ENCODE measurements at regions of chr11 and their contacts with region 1.

Region 1: DNA sequence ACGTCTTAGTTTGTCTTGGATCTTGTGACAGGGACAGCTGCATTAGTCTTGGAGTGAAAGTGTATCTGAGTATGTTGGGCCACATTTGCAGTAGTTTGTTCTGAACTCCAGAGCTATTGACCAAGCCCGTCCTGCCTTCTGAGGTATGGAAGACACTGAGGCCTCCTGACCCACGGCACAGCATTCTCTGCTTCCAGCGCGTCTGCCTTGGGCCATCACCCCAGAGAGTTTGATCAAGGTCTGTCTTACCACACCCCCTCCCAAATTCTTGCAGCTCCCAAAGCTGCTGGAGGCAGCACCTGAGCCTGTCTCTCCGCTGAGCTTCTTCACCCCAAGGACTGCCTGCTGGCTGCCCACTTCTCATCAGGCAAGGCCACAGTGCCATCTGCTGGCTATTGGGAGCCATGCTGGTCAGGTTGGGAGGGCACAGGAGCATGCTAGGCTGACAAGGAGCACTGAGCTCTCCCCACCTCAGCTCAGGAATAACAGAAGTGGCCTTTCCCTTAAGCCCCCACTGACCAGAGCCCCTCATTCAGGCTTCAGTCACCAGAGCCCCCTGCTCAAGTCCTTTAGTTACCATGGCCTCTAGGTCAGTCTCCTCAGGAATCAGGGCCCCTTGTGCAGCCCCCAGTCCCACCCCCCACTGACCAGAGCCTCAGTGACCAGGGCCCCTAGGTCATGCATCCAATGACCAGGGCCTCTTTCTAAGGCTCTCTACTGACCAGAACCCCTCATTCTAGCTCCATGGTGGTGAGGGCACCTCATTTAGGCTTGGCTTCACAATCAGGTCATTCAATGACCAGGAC is 27.2 kb upstream of the SMPD1 start:
- DNase-seq: peak; percentile 72
- H3K4me3 ChIP-seq: no peak overlapping the region
- H3K27ac ChIP-seq: no peak overlapping the region
- H3K4me1 ChIP-seq: no peaks in the 10 kb centered on the region
- H3K27me3 ChIP-seq: no peaks in the 10 kb centered on the region
- CTCF ChIP-seq: peak; percentile 88 to 97
- POLR2A ChIP-seq: no peak

Region 2: DNA sequence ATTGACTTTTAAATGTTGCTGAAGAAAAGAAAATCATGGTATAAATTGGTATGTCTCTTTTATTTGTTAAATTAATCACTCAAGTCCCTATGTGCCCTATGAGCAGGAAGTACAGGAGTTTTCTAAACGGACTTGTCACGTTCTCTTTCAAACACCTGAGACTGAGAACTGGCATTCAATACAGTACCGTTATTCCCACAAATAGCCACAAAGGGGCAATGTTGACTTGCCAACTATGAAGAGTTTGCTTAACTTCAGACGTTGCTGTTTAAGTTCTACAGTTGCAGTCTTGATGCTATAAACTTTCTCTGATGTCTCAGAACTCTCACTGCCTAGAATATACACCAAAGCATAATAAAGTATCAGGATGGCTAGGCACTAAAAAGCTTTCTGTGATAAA is 340.1 kb before region 1 on chr11:
- CTCF ChIA-PET with region 1: interaction called, 149 read pairs
- POLR2A ChIA-PET with region 1: no interaction called
- dilution Hi-C with region 1: no loop called
- intact Hi-C with region 1: loop called (anchors 1 kb)
- DNase-seq: peak; percentile 70
- H3K4me3 ChIP-seq: no peak overlapping the region
- H3K27ac ChIP-seq: no peak overlapping the region
- H3K4me1 ChIP-seq: no peaks in the 10 kb centered on the region
- H3K27me3 ChIP-seq: peaks cover 5 to 9% of the 10 kb centered on the region in 2 experiments
- CTCF ChIP-seq: peak; percentile 36 to 46
- POLR2A ChIP-seq: no peak

Region 3: DNA sequence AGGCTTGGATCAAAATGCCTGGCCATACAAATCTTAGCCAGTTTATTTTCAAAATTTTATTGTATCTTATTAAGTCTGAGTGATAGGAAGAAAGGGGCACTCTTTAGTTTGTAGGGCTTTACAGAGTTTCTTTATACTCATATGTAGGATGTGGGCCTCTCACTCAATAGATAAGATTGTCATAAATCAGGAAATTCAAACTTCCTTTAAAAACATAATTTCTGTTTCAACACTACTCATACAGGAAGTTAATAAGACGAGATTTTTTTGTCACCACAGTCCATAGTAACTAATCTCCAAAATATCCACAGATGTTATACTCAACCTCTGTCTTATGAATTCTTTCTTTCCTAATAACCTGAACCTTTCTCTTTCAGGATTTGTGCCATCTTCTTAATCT is 268.9 kb before region 1 on chr11:
- CTCF ChIA-PET with region 1: no interaction called
- POLR2A ChIA-PET with region 1: no interaction called
- dilution Hi-C with region 1: no loop called
- intact Hi-C with region 1: no loop called
- DNase-seq: no peak
- H3K4me3 ChIP-seq: no peak overlapping the region
- H3K27ac ChIP-seq: no peak overlapping the region
- H3K4me1 ChIP-seq: peaks cover 5% of the 10 kb centered on the region
- H3K27me3 ChIP-seq: peaks cover 0 to 21% of the 10 kb centered on the region in 2 experiments
- CTCF ChIP-seq: no peak
- POLR2A ChIP-seq: no peak

Region 4: GRCh38 chr11:6285019-6285418 is 78.1 kb before region 1 on chr11:
- CTCF ChIA-PET with region 1: interaction called, 39 read pairs
- POLR2A ChIA-PET with region 1: no interaction called
- dilution Hi-C with region 1: no loop called
- intact Hi-C with region 1: no loop called
- DNase-seq: no peak
- H3K4me3 ChIP-seq: no peak overlapping the region
- H3K27ac ChIP-seq: no peak overlapping the region
- H3K4me1 ChIP-seq: no peaks in the 10 kb centered on the region
- H3K27me3 ChIP-seq: peaks cover 22 to 34% of the 10 kb centered on the region in 2 experiments
- CTCF ChIP-seq: no peak
- POLR2A ChIP-seq: no peak

Region 5: GRCh38 chr11:6315811-6316425 is 47.2 kb before region 1 on chr11:
- CTCF ChIA-PET with region 1: interaction called, 75 read pairs
- POLR2A ChIA-PET with region 1: no interaction called
- dilution Hi-C with region 1: no loop called
- intact Hi-C with region 1: no loop called
- DNase-seq: peak; percentile 51
- H3K4me3 ChIP-seq: no peak overlapping the region
- H3K27ac ChIP-seq: no peak overlapping the region
- H3K4me1 ChIP-seq: peaks cover 18% of the 10 kb centered on the region
- H3K27me3 ChIP-seq: no peaks in the 10 kb centered on the region
- CTCF ChIP-seq: peak; percentile 86 to 88
- POLR2A ChIP-seq: no peak

Region 6: GRCh38 chr11:6345366-6345765 is 17.7 kb before region 1 on chr11:
- CTCF ChIA-PET with region 1: interaction called, 35 read pairs
- POLR2A ChIA-PET with region 1: no interaction called
- dilution Hi-C with region 1: no loop called
- intact Hi-C with region 1: no loop called
- DNase-seq: no peak
- H3K4me3 ChIP-seq: no peak overlapping the region
- H3K27ac ChIP-seq: no peak overlapping the region
- H3K4me1 ChIP-seq: no peaks in the 10 kb centered on the region
- H3K27me3 ChIP-seq: peaks cover 2 to 3% of the 10 kb centered on the region in 2 experiments
- CTCF ChIP-seq: no peak
- POLR2A ChIP-seq: no peak

Region 7: DNA sequence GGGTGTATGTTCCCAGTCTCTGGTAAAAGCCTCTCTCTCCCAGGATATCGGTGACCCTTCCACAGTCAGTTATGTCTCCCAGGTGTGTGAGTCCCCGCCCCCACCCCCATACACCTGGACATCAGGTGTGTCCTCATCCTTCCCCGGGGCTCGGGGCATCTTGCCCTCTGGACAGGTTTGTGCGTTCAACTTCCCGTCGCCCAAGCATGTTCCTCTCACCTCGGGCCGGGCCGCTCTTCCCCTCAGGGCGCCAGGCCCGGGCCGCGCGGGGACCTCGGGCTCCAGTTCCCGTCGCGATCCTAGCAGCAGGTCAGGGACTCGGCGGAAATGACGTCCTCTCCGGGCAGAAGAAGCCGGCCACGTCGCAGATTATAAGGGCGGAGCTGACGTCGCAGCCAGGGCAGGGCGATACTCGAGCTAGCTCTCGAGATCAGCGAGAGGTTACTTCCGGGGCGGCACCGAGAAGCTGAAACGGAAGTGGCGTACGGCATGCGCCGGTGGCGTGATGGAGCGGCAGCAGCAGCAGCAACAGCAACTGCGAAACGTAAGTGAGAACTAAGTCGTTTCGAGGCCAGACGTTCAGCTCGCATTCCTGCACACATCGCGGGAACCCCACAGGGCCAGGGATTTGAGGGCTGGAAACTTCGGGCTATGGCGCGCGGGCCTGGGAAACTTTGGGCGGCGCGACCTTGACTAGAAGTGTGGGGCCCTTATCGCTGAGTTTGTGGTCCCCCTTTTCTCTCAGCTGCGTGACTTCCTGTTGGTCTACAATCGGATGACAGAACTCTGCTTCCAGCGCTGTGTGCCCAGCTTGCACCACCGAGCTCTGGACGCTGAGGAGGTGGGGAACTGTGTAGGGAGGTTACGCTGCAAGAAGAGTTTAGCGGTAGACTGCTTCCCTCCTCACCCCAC is 118.2 kb after region 1 on chr11 and contains the starts of genes ARFIP2 and TIMM10B:
- CTCF ChIA-PET with region 1: no interaction called
- POLR2A ChIA-PET with region 1: no interaction called
- dilution Hi-C with region 1: no loop called
- intact Hi-C with region 1: no loop called
- DNase-seq: peak; percentile 98
- H3K4me3 ChIP-seq: peak within 1 kb of the TSS; percentile 19 to 65 (median 57)
- H3K27ac ChIP-seq: peak within 1 kb of the TSS; percentile 72
- H3K4me1 ChIP-seq: peaks cover 18% of the 10 kb centered on the region
- H3K27me3 ChIP-seq: no peaks in the 10 kb centered on the region
- CTCF ChIP-seq: no peak
- POLR2A ChIP-seq: peak; percentile 70
- total RNA-seq, gene ARFIP2: 46.7 and 48.4 TPM in 2 replicates
- total RNA-seq, gene TIMM10B: 29.2 and 31.3 TPM in 2 replicates